Stomach (tissue), 19 donors: ENCODE measurements at regions of chr22 and their contacts with region 1.

Region 1: GRCh38 chr22:28019881-28020871 is 101.1 kb upstream of the PITPNB start:
- DNase-seq: peak; percentile 71 to 86
- H3K4me3 ChIP-seq: no peak overlapping the region
- H3K27ac ChIP-seq: no peak overlapping the region
- H3K4me1 ChIP-seq: peaks cover 3 to 20% (median 14%) of the 10 kb centered on the region in 4 donors
- H3K27me3 ChIP-seq: no peaks in the 10 kb centered on the region
- CTCF ChIP-seq: peak in 5 of 7 experiments; percentile 86 to 94 (median 92)
- EP300 ChIP-seq: no peak
- POLR2A ChIP-seq: no peak

Region 2: DNA sequence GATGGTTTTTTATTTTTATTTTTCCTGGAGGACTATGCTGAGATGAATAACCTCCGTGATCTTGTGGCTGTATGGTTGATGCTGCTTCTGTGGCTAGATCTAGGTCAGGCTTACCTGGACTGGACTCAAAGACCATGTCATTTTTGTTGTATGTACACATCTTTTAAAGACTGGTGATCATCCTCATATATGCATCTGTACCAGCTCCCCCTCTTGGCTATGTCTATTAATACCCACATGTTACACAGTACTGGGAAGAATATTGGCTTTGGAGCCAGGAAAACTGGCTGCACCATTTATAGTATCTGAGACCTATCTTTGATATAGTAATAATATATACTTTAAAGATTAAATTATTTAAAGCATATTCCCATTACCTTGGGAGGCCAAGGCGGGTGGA is 82.7 kb before region 1 on chr22:
- intact Hi-C with region 1: no loop called
- DNase-seq: no peak
- H3K4me3 ChIP-seq: no peak overlapping the region
- H3K27ac ChIP-seq: no peak overlapping the region
- H3K4me1 ChIP-seq: no peaks in the 10 kb centered on the region
- H3K27me3 ChIP-seq: no peaks in the 10 kb centered on the region
- CTCF ChIP-seq: no peak
- EP300 ChIP-seq: no peak
- POLR2A ChIP-seq: no peak

Region 3: DNA sequence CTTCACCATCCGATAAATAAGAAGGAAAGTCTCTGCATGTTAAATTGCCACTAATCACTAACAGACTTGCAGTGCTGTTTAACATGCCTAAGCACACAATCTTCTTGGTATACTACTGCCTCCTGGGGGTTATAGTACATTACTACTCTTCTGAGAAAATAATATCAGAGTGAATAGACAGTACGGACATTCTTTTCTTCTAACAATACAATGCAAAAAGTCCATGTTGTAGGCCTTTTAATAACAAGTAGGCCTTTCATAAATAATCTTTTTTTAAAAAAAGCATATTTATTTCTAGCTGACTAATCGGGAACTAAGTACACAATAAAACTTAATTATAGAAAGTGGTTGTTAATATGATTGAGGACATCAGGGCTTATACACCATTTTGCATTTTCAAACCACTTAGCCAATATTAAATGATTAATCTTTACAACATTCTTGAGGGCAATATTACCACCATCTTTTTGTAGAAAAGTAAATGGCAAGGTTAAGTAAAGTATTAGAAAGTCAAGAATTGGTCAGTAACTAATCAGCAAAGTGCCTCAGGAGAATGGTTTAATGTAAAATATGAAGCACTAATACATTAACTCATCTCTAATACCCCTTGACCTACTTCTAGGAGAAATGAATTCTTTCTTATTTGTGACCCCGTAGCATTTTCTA is 574.8 kb after region 1 on chr22:
- intact Hi-C with region 1: loop called (anchors 10 kb)
- DNase-seq: peak in 1 of 2 donors; percentile 79
- H3K4me3 ChIP-seq: no peak overlapping the region
- H3K27ac ChIP-seq: no peak overlapping the region
- H3K4me1 ChIP-seq: peaks cover 0 to 16% (median 6%) of the 10 kb centered on the region in 4 donors
- H3K27me3 ChIP-seq: no peaks in the 10 kb centered on the region
- CTCF ChIP-seq: peak in 5 of 7 experiments; percentile 50 to 79 (median 59)
- EP300 ChIP-seq: no peak
- POLR2A ChIP-seq: no peak